H1 (cell line): ENCODE measurements at regions of chr3 and their contacts with region 1.

Region 1: DNA sequence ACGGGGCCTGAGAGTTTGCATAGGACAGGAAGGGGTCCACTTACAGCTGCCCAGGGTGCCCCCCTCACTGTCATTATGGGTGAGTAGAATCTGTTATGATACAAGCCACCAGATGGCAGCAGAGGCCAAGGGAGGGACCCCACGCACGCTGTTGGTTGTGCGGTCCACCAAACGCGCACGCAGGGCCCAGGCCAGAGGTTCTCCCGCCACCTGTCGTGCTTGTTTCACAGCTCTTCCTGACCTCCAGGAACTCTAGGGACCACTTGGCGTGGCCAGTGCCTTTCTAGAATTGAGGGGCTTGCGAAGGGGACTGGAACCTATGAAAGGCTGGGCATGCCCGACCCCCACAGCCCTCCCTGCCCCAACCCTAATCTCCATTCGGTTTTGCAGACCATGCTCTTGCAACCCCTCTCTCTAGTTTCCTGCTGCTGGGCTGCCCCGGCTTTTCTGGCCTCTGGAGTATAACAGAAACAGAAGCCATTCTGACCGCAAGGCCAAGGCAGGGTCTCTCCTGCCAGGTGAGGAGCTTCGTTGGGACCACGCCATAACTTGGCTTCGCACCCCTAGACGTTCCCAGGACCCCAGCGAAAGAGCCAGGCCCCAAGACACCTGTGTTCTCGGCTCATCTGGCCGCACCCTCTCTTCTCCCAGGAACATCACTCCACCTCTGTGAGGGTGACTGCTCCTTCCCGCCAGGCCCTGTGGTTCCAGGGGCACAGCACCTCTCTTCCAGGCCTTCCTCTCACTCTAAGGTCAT is 46.0 kb downstream of the ALDH1L1 start:
- DNase-seq: peak in 1 of 2 experiments; percentile 87
- H3K4me3 ChIP-seq: no peak overlapping the region
- H3K27ac ChIP-seq: no peak overlapping the region
- H3K4me1 ChIP-seq: peaks cover 0 to 21% (median 8%) of the 10 kb centered on the region in 4 experiments; a peak in 6 of 7 replicates
- H3K27me3 ChIP-seq: peaks cover 0 to 3% (median 1%) of the 10 kb centered on the region in 4 experiments; a peak in 5 of 7 replicates
- CTCF ChIP-seq: peak in 2 of 3 experiments; percentile 76 to 80; a peak in 3 of 4 replicates
- EP300 ChIP-seq: no peak
- POLR2A ChIP-seq: no peak
- RAD21 ChIP-seq: peak; percentile 95 to 97

Region 2: DNA sequence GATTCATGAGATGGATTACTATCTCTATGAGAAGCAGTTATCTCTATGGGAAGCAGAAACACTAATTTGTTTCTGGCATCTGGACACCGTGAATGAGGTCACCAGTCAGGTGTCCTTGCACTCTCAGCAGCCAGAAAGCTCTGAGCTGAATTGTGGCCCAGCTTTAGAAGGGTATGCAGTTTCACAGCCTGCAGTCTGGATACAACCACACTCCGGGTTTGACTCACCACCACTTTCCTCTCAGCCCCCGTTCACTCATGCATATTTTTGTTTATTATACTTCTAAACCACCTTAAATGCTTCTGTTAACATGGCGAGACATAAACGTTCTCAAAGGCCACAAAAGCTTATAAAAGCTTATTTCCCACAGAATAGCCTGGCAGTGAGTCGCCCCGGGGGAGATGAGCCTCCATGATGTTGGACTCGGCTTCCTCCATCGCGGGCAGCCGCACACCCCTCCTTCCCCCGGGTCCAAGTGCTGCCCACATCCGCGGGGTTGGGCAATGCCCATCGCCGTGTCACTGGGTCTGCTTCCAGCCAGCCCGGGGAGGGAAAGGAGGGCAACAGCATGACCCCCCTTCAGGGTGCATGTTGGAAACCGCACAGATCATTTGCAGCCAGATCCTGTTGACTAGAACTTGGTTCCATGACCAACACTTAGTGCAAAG is 33.6 kb before region 1 on chr3:
- CTCF ChIA-PET with region 1: interaction called, 52 read pairs
- POLR2A ChIA-PET with region 1: no interaction called
- DNase-seq: no peak
- H3K4me3 ChIP-seq: no peak overlapping the region
- H3K27ac ChIP-seq: no peak overlapping the region
- H3K4me1 ChIP-seq: no peaks in the 10 kb centered on the region; a peak in 1 of 7 replicates
- H3K27me3 ChIP-seq: no peaks in the 10 kb centered on the region
- CTCF ChIP-seq: no peak
- EP300 ChIP-seq: no peak
- POLR2A ChIP-seq: no peak
- RAD21 ChIP-seq: no peak

Region 3: GRCh38 chr3:126119008-126119675 is 15.3 kb before region 1 on chr3:
- CTCF ChIA-PET with region 1: interaction called, 52 read pairs
- POLR2A ChIA-PET with region 1: interaction called, 4 read pairs
- DNase-seq: peak in 1 of 2 experiments; percentile 20
- H3K4me3 ChIP-seq: no peak overlapping the region
- H3K27ac ChIP-seq: no peak overlapping the region
- H3K4me1 ChIP-seq: peaks cover 0 to 3% (median 2%) of the 10 kb centered on the region in 4 experiments; a peak in 4 of 7 replicates
- H3K27me3 ChIP-seq: no peaks in the 10 kb centered on the region
- CTCF ChIP-seq: no peak
- EP300 ChIP-seq: no peak
- POLR2A ChIP-seq: no peak
- RAD21 ChIP-seq: no peak

Region 4: DNA sequence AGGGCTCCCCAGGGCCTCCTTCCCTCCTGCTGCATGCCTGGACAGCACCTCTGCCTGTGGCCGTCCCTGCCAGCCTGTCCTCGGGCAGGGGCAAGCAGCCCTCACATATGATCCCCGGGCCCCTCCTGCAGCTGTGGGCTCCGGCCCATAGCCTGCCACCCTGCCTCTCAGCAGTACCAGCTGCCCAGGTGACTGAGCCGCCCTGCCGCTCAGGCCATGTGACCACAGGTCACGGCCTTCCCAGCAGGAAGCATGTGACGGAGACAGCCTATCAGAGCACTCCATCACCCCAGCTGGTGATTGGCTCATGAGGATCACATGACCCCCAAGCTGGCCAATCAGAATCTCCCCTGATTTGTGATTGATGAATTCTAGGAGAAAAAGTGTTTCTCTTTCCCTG is 22.1 kb after region 1 on chr3:
- CTCF ChIA-PET with region 1: interaction called, 58 read pairs
- POLR2A ChIA-PET with region 1: no interaction called
- DNase-seq: peak in 1 of 2 experiments; percentile 44
- H3K4me3 ChIP-seq: no peak overlapping the region
- H3K27ac ChIP-seq: no peak overlapping the region
- H3K4me1 ChIP-seq: no peaks in the 10 kb centered on the region
- H3K27me3 ChIP-seq: no peaks in the 10 kb centered on the region
- CTCF ChIP-seq: no peak
- EP300 ChIP-seq: no peak
- POLR2A ChIP-seq: no peak
- RAD21 ChIP-seq: no peak

Region 5: GRCh38 chr3:126212602-126213378 is 78.4 kb after region 1 on chr3:
- CTCF ChIA-PET with region 1: interaction called, 29 read pairs
- POLR2A ChIA-PET with region 1: interaction called, 4 read pairs
- DNase-seq: peak; percentile 43 to 85
- H3K4me3 ChIP-seq: peak overlapping the region; percentile 37 to 68 (median 58)
- H3K27ac ChIP-seq: no peak overlapping the region
- H3K4me1 ChIP-seq: peaks cover 0 to 12% (median 8%) of the 10 kb centered on the region in 4 experiments; a peak in 6 of 7 replicates
- H3K27me3 ChIP-seq: peaks cover 0 to 13% (median 10%) of the 10 kb centered on the region in 4 experiments; a peak in 5 of 7 replicates
- CTCF ChIP-seq: peak; percentile 41 to 66 (median 54)
- EP300 ChIP-seq: peak in 1 of 2 experiments; percentile 55; a peak in 1 of 3 replicates
- POLR2A ChIP-seq: peak in 1 of 2 experiments; percentile 42; a peak in 1 of 3 replicates
- RAD21 ChIP-seq: peak; percentile 39 to 60; a peak in 3 of 4 replicates

Region 6: GRCh38 chr3:126317029-126317996 is 182.9 kb after region 1 on chr3:
- CTCF ChIA-PET with region 1: no interaction called
- POLR2A ChIA-PET with region 1: no interaction called
- DNase-seq: no peak
- H3K4me3 ChIP-seq: no peak overlapping the region
- H3K27ac ChIP-seq: no peak overlapping the region
- H3K4me1 ChIP-seq: peaks cover 0 to 12% (median 5%) of the 10 kb centered on the region in 4 experiments; a peak in 5 of 7 replicates
- H3K27me3 ChIP-seq: no peaks in the 10 kb centered on the region; a peak in 1 of 7 replicates
- CTCF ChIP-seq: no peak
- EP300 ChIP-seq: no peak
- POLR2A ChIP-seq: no peak
- RAD21 ChIP-seq: no peak

Region 7: DNA sequence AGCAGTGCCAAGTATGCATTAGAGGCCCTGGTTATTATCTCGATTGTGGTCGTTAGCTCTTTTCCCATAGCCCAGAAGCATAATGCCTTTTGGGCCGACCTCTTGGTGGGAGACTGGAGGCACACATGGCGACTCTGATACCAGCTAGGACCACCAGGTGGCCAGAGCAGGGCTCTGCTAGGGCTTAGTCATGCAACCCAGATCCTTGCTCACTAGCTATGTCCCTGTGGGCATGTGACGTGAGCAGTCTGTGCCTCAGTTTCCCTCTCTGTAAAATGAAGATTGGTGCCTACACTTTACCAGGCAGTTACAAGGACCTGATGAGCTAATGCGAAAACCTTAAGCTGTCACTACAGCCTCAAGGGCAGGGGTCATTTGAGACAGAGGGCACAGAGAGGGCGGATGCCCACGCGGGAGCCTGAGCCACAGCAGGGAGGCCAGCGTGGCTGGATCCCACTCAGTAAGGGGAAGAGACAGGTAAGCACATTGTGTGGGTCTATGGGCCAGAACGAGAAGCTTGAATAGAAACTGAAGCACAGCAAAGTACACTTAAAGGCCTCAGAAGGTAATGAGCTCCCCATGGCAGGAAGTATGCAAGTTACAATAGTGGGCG is 214.0 kb after region 1 on chr3:
- CTCF ChIA-PET with region 1: interaction called, 21 read pairs
- POLR2A ChIA-PET with region 1: no interaction called
- DNase-seq: peak in 1 of 2 experiments; percentile 52
- H3K4me3 ChIP-seq: no peak overlapping the region
- H3K27ac ChIP-seq: no peak overlapping the region
- H3K4me1 ChIP-seq: peaks cover 0 to 2% (median 0%) of the 10 kb centered on the region in 4 experiments; a peak in 4 of 7 replicates
- H3K27me3 ChIP-seq: no peaks in the 10 kb centered on the region
- CTCF ChIP-seq: peak in 2 of 3 experiments; percentile 66 to 71; a peak in 3 of 4 replicates
- EP300 ChIP-seq: no peak
- POLR2A ChIP-seq: no peak
- RAD21 ChIP-seq: peak; percentile 44 to 68

Region 8: GRCh38 chr3:126394575-126395228 is 260.3 kb after region 1 on chr3 and contains the start of gene CFAP100:
- CTCF ChIA-PET with region 1: interaction called, 35 read pairs
- POLR2A ChIA-PET with region 1: no interaction called
- DNase-seq: peak; percentile 36 to 85
- H3K4me3 ChIP-seq: peak within 1 kb of the TSS; percentile 5 to 58 (median 30); a peak in 6 of 8 replicates
- H3K27ac ChIP-seq: no peak within 1 kb of the TSS
- H3K4me1 ChIP-seq: peaks cover 0 to 8% (median 2%) of the 10 kb centered on the region in 4 experiments; a peak in 3 of 7 replicates
- H3K27me3 ChIP-seq: peaks cover 9 to 34% (median 30%) of the 10 kb centered on the region in 4 experiments
- CTCF ChIP-seq: no peak
- EP300 ChIP-seq: no peak
- POLR2A ChIP-seq: no peak
- RAD21 ChIP-seq: no peak
- total RNA-seq, gene CFAP100: not detected in 2 replicates